Motor neuron (in vitro differentiated cells): ENCODE measurements at regions of chr3 and their contacts with region 1.

Region 1: DNA sequence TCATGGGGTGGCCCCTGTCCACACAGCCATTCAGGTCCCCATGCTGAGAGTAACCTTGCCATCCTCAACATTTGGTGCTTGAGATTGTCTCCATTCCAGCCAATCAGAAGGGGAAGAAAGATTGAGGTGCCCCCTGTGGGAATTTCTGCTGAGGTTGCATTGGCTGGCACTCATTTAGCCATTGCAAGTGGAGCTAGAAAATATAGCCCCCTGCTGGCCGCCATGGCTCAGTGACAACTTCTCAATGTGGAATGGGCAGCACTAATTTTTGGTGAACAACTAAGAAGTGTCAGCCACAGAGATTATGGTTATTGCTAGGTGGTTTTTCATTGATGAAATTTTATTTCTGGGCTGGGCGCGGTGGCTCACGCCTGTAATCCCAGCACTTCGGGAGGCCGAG is 22.0 kb downstream of the COL6A6 start:
- ATAC-seq: peak in 4 of 8 experiments; percentile 34 to 84 (median 70)
- H3K4me3 ChIP-seq: no peak overlapping the region
- H3K27ac ChIP-seq: no peak overlapping the region
- H3K4me1 ChIP-seq: peaks cover 0 to 3% of the 10 kb centered on the region in 2 donors

Region 2: DNA sequence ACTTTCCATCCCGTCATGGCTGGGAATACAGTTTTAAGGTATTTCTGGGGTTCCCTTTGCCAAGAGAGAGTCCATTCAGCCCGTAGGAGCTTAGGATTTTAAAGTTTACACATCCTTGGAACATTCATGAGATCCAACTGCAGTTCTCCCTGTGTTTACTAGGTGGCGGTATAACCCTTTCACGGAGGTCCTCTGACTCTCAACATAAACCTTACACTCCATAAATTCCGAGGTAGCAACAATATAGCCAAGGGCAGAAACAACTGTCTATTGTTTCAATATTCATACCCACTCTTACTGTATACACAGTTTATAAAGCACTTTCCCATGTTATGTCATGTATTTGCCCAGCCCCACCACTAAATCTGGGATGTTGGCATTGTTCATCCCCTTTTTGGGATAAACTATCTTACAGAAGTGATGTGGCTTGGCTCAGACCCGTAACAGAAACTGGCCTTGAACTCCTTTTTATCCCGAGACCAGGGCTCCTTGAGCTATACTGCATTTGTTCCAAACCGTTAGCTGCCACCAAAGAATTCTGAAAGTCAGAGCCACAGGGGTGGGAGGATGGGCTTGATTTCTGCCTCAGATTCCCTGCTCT is 262.7 kb before region 1 on chr3:
- in situ Hi-C with region 1: loop called in 2 of 9 experiments (anchors 5 to 25 kb)
- ATAC-seq: peak; percentile 33 to 92 (median 76)
- H3K4me3 ChIP-seq: no peak overlapping the region
- H3K27ac ChIP-seq: no peak overlapping the region
- H3K4me1 ChIP-seq: no peaks in the 10 kb centered on the region